ENCODE measurements at regions of chr2 and their contacts with region 1.

Region 1: DNA sequence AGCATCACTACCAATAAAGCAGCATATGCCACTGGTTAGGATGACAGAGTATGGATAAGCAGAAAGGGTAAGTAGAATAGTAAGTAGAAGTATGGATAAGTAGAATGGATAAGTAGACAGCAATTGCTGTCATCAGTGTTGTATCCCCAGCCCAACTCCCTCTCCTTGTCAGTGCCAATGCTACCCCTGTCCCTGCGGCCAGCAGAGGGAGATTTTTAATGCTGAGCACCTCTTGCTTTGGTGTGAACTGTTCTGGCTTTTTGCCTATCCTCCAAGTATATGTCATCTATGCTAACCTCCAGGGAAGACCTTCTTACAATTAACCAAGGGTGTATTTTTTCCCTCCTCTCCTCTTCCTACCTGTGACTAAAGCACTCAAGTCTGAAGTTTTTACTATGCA is 136.7 kb upstream of the SPHKAP start:
- DNase-seq: peak; percentile 76
- H3K4me3 ChIP-seq: no peak overlapping the region
- H3K27ac ChIP-seq: no peak overlapping the region
- H3K4me1 ChIP-seq: peaks cover 14% of the 10 kb centered on the region
- H3K27me3 ChIP-seq: no peaks in the 10 kb centered on the region
- CTCF ChIP-seq: peak; percentile 71

Region 2: GRCh38 chr2:228180181-228181097 is 137.8 kb before region 1 on chr2:
- CTCF ChIA-PET with region 1: no interaction called
- POLR2A ChIA-PET with region 1: no interaction called
- intact Hi-C with region 1: loop called (anchors 10 kb)
- DNase-seq: peak; percentile 96
- H3K4me3 ChIP-seq: peak overlapping the region; percentile 66
- H3K27ac ChIP-seq: peak overlapping the region; percentile 63
- H3K4me1 ChIP-seq: peaks cover 23% of the 10 kb centered on the region
- H3K27me3 ChIP-seq: no peaks in the 10 kb centered on the region
- CTCF ChIP-seq: peak; percentile 52

Measured in A673 (cell line).